ENCODE measurements at regions of chr6 and their contacts with region 1.

Region 1: DNA sequence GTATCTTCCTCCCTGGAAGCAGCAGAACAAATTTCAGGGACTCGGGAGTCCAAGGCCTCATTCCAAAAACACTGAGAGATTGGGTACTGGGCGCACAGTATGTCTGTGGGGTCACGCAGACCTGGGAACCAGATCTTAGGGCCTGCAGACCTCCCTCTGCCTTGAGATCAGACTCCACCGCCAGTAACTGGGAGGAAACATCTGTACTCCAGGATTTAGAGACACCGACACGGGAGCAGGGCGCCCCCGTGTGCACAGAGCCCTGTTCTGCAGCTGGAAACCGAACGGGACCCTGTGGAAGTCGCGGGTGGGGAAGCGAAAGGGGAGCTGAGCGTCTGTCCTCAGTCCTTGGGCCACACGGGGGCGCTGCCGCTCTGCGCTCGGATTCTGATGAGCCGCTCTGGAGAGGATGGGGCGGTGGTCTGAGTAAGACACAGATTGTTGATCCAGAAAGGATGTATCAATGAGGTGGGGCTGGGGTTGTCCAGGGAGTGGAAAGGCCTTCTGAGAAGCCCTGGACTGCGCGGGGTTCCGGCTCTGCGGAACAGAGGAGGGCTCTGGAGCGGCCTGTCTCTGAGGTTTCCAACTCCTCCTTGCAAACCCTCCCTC is 35.7 kb upstream of the HLA-E start:
- DNase-seq: peak; percentile 93
- H3K4me3 ChIP-seq: peak overlapping the region; percentile 21 to 37; a peak in 3 of 4 replicates
- H3K27ac ChIP-seq: no peak overlapping the region
- H3K4me1 ChIP-seq: no peaks in the 10 kb centered on the region
- H3K27me3 ChIP-seq: peaks cover 89% of the 10 kb centered on the region
- CTCF ChIP-seq: peak; percentile 94
- EP300 ChIP-seq: no peak
- RAD21 ChIP-seq: peak; percentile 61

Region 2: DNA sequence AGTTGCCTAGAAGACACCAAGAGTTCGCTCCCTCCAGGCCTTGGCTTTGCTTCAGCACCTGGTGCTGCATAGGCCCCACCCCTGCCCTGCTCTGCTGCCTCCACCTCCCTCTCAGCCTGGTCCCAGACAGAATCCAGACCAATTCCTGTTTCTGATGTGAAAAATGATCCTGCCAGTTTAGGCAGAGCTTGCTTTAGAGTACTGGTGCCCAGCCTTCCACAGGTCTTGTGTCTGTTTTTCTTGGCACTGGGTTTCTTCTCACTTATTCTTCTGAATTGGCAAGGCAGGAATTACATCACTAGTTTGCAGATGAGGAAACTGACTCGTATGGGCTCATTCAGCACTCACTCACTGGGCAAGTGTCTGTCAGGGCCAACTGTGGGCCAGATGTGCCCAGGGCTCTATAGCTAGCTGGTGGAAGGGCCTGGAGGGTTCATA is 458.3 kb before region 1 on chr6:
- CTCF ChIA-PET with region 1: no interaction called
- POLR2A ChIA-PET with region 1: no interaction called
- DNase-seq: no peak
- H3K4me3 ChIP-seq: no peak overlapping the region
- H3K27ac ChIP-seq: no peak overlapping the region; a peak in 1 of 4 replicates
- H3K4me1 ChIP-seq: peaks cover 0 to 14% of the 10 kb centered on the region in 2 experiments; a peak in 1 of 4 replicates
- H3K27me3 ChIP-seq: no peaks in the 10 kb centered on the region
- CTCF ChIP-seq: no peak
- EP300 ChIP-seq: no peak
- RAD21 ChIP-seq: no peak

Region 3: DNA sequence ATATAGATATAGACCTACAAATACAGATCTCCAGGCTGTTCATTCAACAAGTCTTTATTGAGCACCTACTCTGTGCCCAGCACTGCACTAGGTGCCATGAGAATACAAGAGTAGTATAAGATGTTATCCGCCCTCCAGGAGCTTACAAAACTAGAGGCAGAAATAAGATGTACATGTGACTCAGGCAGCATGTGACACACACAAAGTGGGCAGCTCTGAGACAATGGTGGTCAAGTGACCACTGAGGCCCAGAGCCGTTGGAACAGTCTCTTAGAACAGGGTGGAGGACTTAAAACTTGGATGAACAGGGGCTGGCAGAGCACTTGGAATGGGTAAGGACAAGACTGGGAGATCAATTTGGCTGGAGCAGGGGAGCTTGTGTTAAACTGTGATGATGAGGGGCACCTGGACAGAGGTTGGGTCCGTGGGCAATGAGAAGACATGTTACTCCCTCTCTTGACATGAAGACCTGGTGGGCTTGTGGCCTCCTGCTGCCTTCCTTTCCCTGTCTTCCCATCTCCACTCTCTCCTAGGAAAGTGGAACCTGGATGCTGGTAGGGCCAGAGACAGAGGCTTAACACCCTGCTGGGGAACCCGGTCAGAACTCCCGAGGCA is 269.1 kb before region 1 on chr6:
- CTCF ChIA-PET with region 1: no interaction called
- POLR2A ChIA-PET with region 1: no interaction called
- DNase-seq: no peak
- H3K4me3 ChIP-seq: no peak overlapping the region
- H3K27ac ChIP-seq: no peak overlapping the region
- H3K4me1 ChIP-seq: no peaks in the 10 kb centered on the region
- H3K27me3 ChIP-seq: no peaks in the 10 kb centered on the region
- CTCF ChIP-seq: no peak
- EP300 ChIP-seq: no peak
- RAD21 ChIP-seq: no peak

Region 4: DNA sequence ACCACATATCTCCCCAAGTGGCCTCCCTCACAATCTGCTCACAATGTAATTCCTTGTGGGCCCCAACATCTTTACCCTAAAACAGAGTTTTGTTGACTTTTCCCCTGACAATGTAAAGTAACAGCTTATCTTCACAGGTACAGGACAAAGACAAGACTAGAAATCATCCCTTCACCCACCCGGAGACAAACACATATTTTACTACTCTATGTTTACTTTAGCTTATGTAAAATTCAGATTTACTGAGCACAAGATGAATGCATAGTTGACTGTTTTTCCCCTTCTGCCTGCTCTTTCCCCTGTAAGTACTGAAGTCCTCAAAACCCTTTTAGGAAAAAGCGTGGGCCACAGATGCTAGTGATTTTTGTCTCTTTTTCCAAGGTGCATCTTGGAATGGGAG is 47.7 kb before region 1 on chr6:
- CTCF ChIA-PET with region 1: interaction called, 11 read pairs
- POLR2A ChIA-PET with region 1: no interaction called
- DNase-seq: no peak
- H3K4me3 ChIP-seq: no peak overlapping the region
- H3K27ac ChIP-seq: no peak overlapping the region
- H3K4me1 ChIP-seq: no peaks in the 10 kb centered on the region
- H3K27me3 ChIP-seq: peaks cover 34% of the 10 kb centered on the region; the same call in 1 of the 2 replicates
- CTCF ChIP-seq: no peak
- EP300 ChIP-seq: no peak
- RAD21 ChIP-seq: no peak

Region 5: GRCh38 chr6:30463651-30464618 is 10.3 kb after region 1 on chr6:
- CTCF ChIA-PET with region 1: interaction called, 50 read pairs
- POLR2A ChIA-PET with region 1: no interaction called
- DNase-seq: no peak
- H3K4me3 ChIP-seq: no peak overlapping the region
- H3K27ac ChIP-seq: no peak overlapping the region
- H3K4me1 ChIP-seq: no peaks in the 10 kb centered on the region; a peak in 1 of 4 replicates
- H3K27me3 ChIP-seq: peaks cover 92% of the 10 kb centered on the region
- CTCF ChIP-seq: no peak
- EP300 ChIP-seq: no peak
- RAD21 ChIP-seq: no peak

Measured in SK-N-SH (cell line).